PC-9 (cell line): ENCODE measurements at regions of chr1 and their contacts with region 1.

Region 1: DNA sequence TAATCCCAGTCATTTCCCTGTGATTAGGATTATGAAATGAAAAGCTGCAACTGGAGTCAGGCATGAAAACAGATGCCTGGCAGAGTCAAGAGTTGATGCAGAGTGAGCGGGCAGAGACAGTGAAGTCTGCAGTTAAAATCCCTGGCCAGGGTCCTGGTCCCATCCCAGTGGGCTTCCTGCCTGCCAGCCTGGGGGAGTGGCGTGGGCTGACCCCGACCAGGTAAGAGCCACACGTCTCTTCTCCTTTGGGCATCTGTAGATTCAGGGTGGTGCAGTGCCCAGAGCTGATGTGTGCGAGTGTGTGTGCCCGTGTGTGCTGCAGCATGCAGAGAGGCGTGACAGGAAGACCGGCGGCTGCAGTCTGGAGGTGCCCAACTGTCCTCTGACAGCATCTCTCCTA is 6.2 kb upstream of the KIAA1614 start:
- DNase-seq: no peak
- H3K4me3 ChIP-seq: no peak overlapping the region
- H3K27ac ChIP-seq: no peak overlapping the region
- H3K4me1 ChIP-seq: no peaks in the 10 kb centered on the region; the same call in 1 of the 2 replicates
- H3K27me3 ChIP-seq: no peaks in the 10 kb centered on the region; the same call in 1 of the 2 replicates
- CTCF ChIP-seq: no peak

Region 2: DNA sequence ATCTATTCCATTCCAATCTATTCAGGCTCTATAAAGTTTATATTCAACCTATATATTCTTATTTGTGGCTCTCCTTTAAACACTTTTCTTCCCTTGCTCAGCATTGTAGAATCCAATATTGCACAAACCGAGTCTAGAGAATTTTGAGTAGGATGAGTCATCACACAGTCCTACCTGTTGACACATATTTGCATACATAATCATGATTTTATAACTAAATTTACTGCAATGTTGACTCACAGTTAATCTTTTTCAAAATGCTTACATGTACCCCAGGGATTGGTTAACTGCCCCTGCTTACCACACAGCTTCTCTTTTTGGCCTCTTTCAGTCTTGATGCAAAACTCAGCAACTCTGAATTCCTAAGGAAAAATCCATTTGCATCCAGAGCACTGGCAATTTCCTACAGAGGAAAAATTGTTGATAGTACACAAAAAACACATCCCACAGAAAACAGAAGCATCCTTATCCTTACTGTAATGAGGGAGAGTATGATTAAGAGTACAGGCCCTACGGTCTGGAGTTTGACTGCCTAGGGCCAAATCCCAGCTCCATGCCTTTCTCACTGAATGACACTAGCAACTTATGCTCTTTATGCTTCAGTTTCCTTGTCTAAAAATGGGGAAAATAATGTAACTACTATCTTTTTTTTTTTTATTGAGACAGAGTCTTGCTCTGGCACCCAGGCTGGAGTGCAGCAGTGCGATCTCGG is 979.9 kb before region 1 on chr1:
- CTCF ChIA-PET with region 1: no interaction called
- POLR2A ChIA-PET with region 1: interaction called, 12 read pairs
- intact Hi-C with region 1: no loop called
- DNase-seq: peak in 1 of 2 experiments; percentile 75
- H3K4me3 ChIP-seq: no peak overlapping the region
- H3K27ac ChIP-seq: no peak overlapping the region
- H3K4me1 ChIP-seq: peaks cover 17% of the 10 kb centered on the region
- H3K27me3 ChIP-seq: no peaks in the 10 kb centered on the region
- CTCF ChIP-seq: no peak

Region 3: DNA sequence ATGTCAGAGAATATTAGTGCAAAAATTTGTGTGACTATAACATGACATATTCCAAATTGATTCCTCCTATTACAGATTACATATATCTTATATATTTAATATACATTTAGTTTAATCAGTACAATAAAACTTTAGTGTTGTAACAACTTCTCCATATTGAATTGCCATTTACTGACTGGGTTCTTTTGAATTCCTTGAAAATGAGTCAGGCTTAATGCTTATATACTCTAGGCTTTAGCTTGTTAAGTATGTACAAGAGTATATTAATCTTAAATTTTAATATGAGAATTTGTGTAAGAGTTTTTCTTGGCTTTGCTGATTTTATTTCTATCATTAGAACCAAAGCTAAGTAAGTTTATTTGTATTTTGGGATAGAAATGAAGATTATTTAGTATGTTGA is 234.4 kb before region 1 on chr1:
- CTCF ChIA-PET with region 1: no interaction called
- POLR2A ChIA-PET with region 1: no interaction called
- intact Hi-C with region 1: no loop called
- DNase-seq: no peak
- H3K4me3 ChIP-seq: no peak overlapping the region
- H3K27ac ChIP-seq: no peak overlapping the region
- H3K4me1 ChIP-seq: no peaks in the 10 kb centered on the region
- H3K27me3 ChIP-seq: no peaks in the 10 kb centered on the region
- CTCF ChIP-seq: no peak

Region 4: DNA sequence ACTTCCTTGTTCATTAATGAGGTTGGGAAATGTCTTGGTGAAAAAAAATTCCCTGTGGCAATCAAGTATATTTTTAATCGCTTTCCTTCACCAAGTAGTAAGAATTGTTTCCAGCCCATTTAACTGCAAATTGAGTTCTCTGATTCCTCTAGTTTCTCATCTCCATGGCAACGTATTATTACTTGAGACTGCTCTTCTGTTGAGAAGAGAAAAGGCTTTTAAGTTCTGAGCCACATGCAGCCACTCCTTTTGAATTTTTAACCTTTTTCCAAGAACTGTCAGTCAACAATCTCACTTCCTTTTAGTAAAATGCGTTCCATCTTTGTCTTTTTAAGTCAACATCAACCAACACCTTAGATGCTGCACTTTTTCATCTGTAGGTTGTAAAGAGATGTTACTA is 69.5 kb before region 1 on chr1:
- CTCF ChIA-PET with region 1: no interaction called
- POLR2A ChIA-PET with region 1: no interaction called
- intact Hi-C with region 1: no loop called
- DNase-seq: no peak
- H3K4me3 ChIP-seq: no peak overlapping the region
- H3K27ac ChIP-seq: no peak overlapping the region
- H3K4me1 ChIP-seq: no peaks in the 10 kb centered on the region
- H3K27me3 ChIP-seq: no peaks in the 10 kb centered on the region
- CTCF ChIP-seq: no peak